IMR-90 (cell line): ENCODE measurements at regions of chr7 and their contacts with region 1.

Region 1: GRCh38 chr7:94266238-94266644 is 128.5 kb upstream of the COL1A2 start:
- DNase-seq: no peak
- ATAC-seq: no peak
- H3K4me3 ChIP-seq: no peak overlapping the region
- H3K27ac ChIP-seq: no peak overlapping the region
- H3K4me1 ChIP-seq: no peaks in the 10 kb centered on the region; the same call in 1 of the 2 replicates
- H3K27me3 ChIP-seq: no peaks in the 10 kb centered on the region
- CTCF ChIP-seq: no peak
- POLR2A ChIP-seq: no peak
- RAD21 ChIP-seq: no peak

Region 2: GRCh38 chr7:95246831-95247370 is 980.7 kb after region 1 on chr7:
- CTCF ChIA-PET with region 1: no interaction called
- POLR2A ChIA-PET with region 1: no interaction called
- dilution Hi-C with region 1: no loop called
- in situ Hi-C with region 1: loop called (anchors 25 kb)
- intact Hi-C with region 1: no loop called
- DNase-seq: peak; percentile 62
- ATAC-seq: peak; percentile 76
- H3K4me3 ChIP-seq: no peak overlapping the region
- H3K27ac ChIP-seq: no peak overlapping the region
- H3K4me1 ChIP-seq: no peaks in the 10 kb centered on the region
- H3K27me3 ChIP-seq: peaks cover 4% of the 10 kb centered on the region
- CTCF ChIP-seq: peak; percentile 69
- POLR2A ChIP-seq: no peak
- RAD21 ChIP-seq: peak; percentile 72

Region 3: GRCh38 chr7:95269640-95270039 is 1003.4 kb after region 1 on chr7:
- CTCF ChIA-PET with region 1: no interaction called
- POLR2A ChIA-PET with region 1: no interaction called
- dilution Hi-C with region 1: no loop called
- in situ Hi-C with region 1: no loop called
- intact Hi-C with region 1: no loop called
- DNase-seq: no peak
- ATAC-seq: no peak
- H3K4me3 ChIP-seq: no peak overlapping the region
- H3K27ac ChIP-seq: no peak overlapping the region
- H3K4me1 ChIP-seq: no peaks in the 10 kb centered on the region
- H3K27me3 ChIP-seq: 0 out of 2 replicates have a peak, but pooled peaks cover 2% of the 10 kb centered on the region
- CTCF ChIP-seq: no peak
- POLR2A ChIP-seq: no peak
- RAD21 ChIP-seq: no peak